CD8-positive, alpha-beta T cell (primary cell): ENCODE measurements at regions of chr1 and their contacts with region 1.

Region 1: GRCh38 chr1:27300341-27301051 is 21.5 kb upstream of the TMEM222 start:
- DNase-seq: peak; percentile 60 to 90 (median 74)
- ATAC-seq: peak; percentile 99
- H3K4me3 ChIP-seq: no peak overlapping the region
- H3K4me3 Mint-ChIP-seq: no peak overlapping the region
- H3K27ac ChIP-seq: no peak overlapping the region
- H3K27ac Mint-ChIP-seq: no peak overlapping the region
- H3K4me1 ChIP-seq: no peaks in the 10 kb centered on the region
- H3K4me1 Mint-ChIP-seq: peaks cover 6% of the 10 kb centered on the region
- H3K27me3 ChIP-seq: no peaks in the 10 kb centered on the region
- H3K27me3 Mint-ChIP-seq: no peaks in the 10 kb centered on the region
- CTCF ChIP-seq: peak; percentile 84

Region 2: GRCh38 chr1:27097484-27097917 is 203.0 kb before region 1 on chr1:
- CTCF ChIA-PET with region 1: interaction called, 83 read pairs
- POLR2A ChIA-PET with region 1: no interaction called
- intact Hi-C with region 1: no loop called
- DNase-seq: peak; percentile 47 to 83 (median 73)
- ATAC-seq: peak; percentile 100
- H3K4me3 ChIP-seq: no peak overlapping the region
- H3K4me3 Mint-ChIP-seq: no peak overlapping the region
- H3K27ac ChIP-seq: no peak overlapping the region
- H3K27ac Mint-ChIP-seq: no peak overlapping the region
- H3K4me1 ChIP-seq: no peaks in the 10 kb centered on the region
- H3K4me1 Mint-ChIP-seq: peaks cover 3% of the 10 kb centered on the region
- H3K27me3 ChIP-seq: no peaks in the 10 kb centered on the region
- H3K27me3 Mint-ChIP-seq: no peaks in the 10 kb centered on the region
- CTCF ChIP-seq: peak; percentile 90

Region 3: GRCh38 chr1:27284425-27285273 is 15.8 kb before region 1 on chr1:
- CTCF ChIA-PET with region 1: interaction called, 94 read pairs
- POLR2A ChIA-PET with region 1: no interaction called
- intact Hi-C with region 1: no loop called
- DNase-seq: peak; percentile 79 to 94 (median 88)
- ATAC-seq: peak; percentile 98
- H3K4me3 ChIP-seq: no peak overlapping the region
- H3K4me3 Mint-ChIP-seq: no peak overlapping the region
- H3K27ac ChIP-seq: no peak overlapping the region
- H3K27ac Mint-ChIP-seq: no peak overlapping the region
- H3K4me1 ChIP-seq: no peaks in the 10 kb centered on the region
- H3K4me1 Mint-ChIP-seq: peaks cover 5% of the 10 kb centered on the region
- H3K27me3 ChIP-seq: no peaks in the 10 kb centered on the region
- H3K27me3 Mint-ChIP-seq: no peaks in the 10 kb centered on the region
- CTCF ChIP-seq: peak; percentile 87

Region 4: DNA sequence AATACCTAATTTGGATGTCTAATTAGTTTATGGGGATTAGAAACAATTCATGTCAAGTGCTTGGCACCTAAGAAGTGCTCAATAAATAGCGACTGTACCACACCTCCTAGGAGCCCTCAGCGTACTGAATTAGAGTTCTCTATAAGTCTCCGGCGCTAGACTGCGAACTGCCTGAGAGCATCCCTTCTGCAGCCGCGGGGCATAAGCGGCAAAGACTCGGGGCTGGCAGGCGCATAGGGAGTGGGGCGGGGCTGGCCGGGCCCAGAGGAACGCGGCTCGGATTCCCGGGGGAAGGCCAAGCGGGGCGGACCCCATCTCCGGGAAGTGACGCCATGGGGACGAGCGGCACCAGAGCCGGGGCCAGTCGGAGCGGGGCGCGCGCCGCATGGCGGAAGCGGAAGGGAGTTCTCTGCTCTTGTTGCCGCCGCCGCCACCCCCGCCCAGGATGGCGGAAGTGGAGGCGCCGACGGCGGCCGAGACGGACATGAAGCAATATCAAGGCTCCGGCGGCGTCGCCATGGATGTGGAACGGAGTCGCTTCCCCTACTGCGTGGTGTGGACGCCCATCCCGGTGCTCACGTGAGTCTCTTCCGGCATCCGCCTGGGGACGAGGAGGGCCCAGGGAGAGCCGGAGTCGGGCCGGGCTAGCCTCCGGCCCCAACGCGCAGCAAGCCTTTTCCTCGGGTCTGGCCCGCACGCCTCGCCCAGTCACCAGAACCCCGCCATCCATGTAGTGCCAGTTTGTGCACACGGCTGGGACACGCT is 21.5 kb after region 1 on chr1 and contains the start of gene TMEM222:
- CTCF ChIA-PET with region 1: interaction called, 17 read pairs
- POLR2A ChIA-PET with region 1: no interaction called
- intact Hi-C with region 1: no loop called
- DNase-seq: peak; percentile 95 to 99 (median 97)
- ATAC-seq: peak; percentile 93
- H3K4me3 ChIP-seq: peak within 1 kb of the TSS; percentile 95 to 99
- H3K4me3 Mint-ChIP-seq: peak within 1 kb of the TSS; percentile 98
- H3K27ac ChIP-seq: peak within 1 kb of the TSS; percentile 88 to 95
- H3K27ac Mint-ChIP-seq: peak within 1 kb of the TSS; percentile 97
- H3K4me1 ChIP-seq: peaks cover 40% of the 10 kb centered on the region
- H3K4me1 Mint-ChIP-seq: peaks cover 48% of the 10 kb centered on the region
- H3K27me3 ChIP-seq: no peaks in the 10 kb centered on the region
- H3K27me3 Mint-ChIP-seq: no peaks in the 10 kb centered on the region
- CTCF ChIP-seq: no peak
- total RNA-seq, gene TMEM222: 24.1 to 25.2 TPM

Region 5: GRCh38 chr1:27349784-27350662 is 49.5 kb after region 1 on chr1:
- CTCF ChIA-PET with region 1: interaction called, 39 read pairs
- POLR2A ChIA-PET with region 1: no interaction called
- intact Hi-C with region 1: no loop called
- DNase-seq: peak in 1 of 9 experiments; percentile 36
- ATAC-seq: peak; percentile 27
- H3K4me3 ChIP-seq: peak overlapping the region in 1 of 2 experiments; percentile 8
- H3K4me3 Mint-ChIP-seq: no peak overlapping the region
- H3K27ac ChIP-seq: no peak overlapping the region
- H3K27ac Mint-ChIP-seq: no peak overlapping the region
- H3K4me1 ChIP-seq: peaks cover 9% of the 10 kb centered on the region
- H3K4me1 Mint-ChIP-seq: peaks cover 26% of the 10 kb centered on the region
- H3K27me3 ChIP-seq: no peaks in the 10 kb centered on the region
- H3K27me3 Mint-ChIP-seq: no peaks in the 10 kb centered on the region
- CTCF ChIP-seq: no peak

Region 6: DNA sequence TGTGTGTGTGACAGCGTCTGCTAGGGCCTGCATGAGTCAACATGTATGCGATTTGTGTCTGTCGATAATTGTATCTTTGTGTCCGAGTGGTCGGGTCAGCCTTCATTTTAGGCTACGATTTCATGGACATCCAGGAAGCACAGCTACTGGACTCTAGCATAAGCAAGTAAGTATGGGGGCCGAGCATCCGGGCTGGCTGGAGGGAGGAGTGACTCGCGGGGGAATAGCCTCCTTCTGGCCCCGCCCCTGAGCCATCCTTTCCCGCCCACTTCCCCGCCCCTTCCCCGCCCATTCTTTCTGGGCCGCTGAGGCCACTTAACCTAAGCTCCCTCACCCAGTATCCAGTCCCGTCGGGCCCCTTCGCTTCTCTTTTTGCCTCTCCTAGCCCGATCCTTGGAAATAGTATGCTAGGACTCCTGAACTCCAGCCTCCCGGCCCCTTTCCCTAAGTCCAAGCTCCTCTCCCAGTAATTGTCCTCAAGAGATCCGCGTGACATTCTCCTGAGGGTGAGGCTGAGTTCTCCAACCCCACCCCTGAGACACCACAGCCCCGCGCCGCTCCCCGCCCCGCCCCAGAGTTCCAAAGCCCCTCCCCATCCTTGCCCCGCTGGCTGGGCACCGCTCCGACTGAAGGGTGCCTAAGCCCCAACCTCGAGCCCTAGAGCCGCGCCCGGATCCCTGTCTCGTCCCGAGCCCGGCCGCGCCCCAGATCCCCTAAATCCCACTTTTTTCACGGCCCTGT is 65.0 kb after region 1 on chr1:
- CTCF ChIA-PET with region 1: interaction called, 17 read pairs
- POLR2A ChIA-PET with region 1: no interaction called
- intact Hi-C with region 1: no loop called
- DNase-seq: peak; percentile 62 to 85 (median 78)
- ATAC-seq: peak; percentile 78
- H3K4me3 ChIP-seq: peak overlapping the region; percentile 66 to 73
- H3K4me3 Mint-ChIP-seq: peak overlapping the region; percentile 86
- H3K27ac ChIP-seq: no peak overlapping the region
- H3K27ac Mint-ChIP-seq: no peak overlapping the region
- H3K4me1 ChIP-seq: peaks cover 17% of the 10 kb centered on the region
- H3K4me1 Mint-ChIP-seq: peaks cover 34% of the 10 kb centered on the region
- H3K27me3 ChIP-seq: no peaks in the 10 kb centered on the region
- H3K27me3 Mint-ChIP-seq: no peaks in the 10 kb centered on the region
- CTCF ChIP-seq: no peak

Region 7: GRCh38 chr1:27481994-27482620 is 181.6 kb after region 1 on chr1:
- CTCF ChIA-PET with region 1: no interaction called
- POLR2A ChIA-PET with region 1: no interaction called
- intact Hi-C with region 1: no loop called
- DNase-seq: no peak
- ATAC-seq: no peak
- H3K4me3 ChIP-seq: no peak overlapping the region
- H3K4me3 Mint-ChIP-seq: no peak overlapping the region
- H3K27ac ChIP-seq: no peak overlapping the region
- H3K27ac Mint-ChIP-seq: peak overlapping the region; percentile 75
- H3K4me1 ChIP-seq: peaks cover 15% of the 10 kb centered on the region
- H3K4me1 Mint-ChIP-seq: peaks cover 51% of the 10 kb centered on the region
- H3K27me3 ChIP-seq: no peaks in the 10 kb centered on the region
- H3K27me3 Mint-ChIP-seq: no peaks in the 10 kb centered on the region
- CTCF ChIP-seq: no peak